RWPE1 (cell line): ENCODE measurements at regions of chr14 and their contacts with region 1.

Region 1: DNA sequence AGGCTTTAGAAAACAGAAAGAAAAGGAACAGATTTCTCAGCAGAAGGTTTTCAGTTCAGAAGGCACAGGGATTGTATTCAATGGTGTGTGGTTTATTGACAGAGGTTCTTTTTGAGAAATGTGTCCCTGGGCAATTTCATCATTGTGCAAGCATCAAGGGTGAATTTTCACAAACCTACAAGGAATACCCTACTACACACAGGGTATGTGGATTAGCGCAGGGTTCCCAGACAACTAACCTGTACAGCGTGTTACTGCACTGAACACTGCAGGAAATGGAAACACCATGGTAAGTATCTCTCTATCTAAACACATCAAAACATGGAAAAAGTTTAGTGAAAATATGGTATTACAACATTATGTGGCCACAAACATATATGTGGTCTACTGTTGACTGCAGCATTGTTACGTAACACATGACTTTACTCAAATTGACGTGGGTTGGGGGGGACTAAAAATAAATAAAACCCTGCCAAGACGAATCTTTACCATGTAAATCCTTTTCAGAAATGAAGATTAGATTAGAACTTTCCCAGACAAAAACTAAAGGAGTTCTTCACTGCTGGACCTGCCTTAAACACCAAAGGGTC is 893.1 kb downstream of the TMEM121 start:
- DNase-seq: no peak
- H3K27ac ChIP-seq: no peak overlapping the region
- CTCF ChIP-seq: no peak

Region 2: GRCh38 chr14:105647764-105648608 is 771.5 kb before region 1 on chr14:
- CTCF ChIA-PET with region 1: no interaction called
- POLR2A ChIA-PET with region 1: no interaction called
- DNase-seq: no peak
- H3K27ac ChIP-seq: no peak overlapping the region
- CTCF ChIP-seq: no peak

Region 3: DNA sequence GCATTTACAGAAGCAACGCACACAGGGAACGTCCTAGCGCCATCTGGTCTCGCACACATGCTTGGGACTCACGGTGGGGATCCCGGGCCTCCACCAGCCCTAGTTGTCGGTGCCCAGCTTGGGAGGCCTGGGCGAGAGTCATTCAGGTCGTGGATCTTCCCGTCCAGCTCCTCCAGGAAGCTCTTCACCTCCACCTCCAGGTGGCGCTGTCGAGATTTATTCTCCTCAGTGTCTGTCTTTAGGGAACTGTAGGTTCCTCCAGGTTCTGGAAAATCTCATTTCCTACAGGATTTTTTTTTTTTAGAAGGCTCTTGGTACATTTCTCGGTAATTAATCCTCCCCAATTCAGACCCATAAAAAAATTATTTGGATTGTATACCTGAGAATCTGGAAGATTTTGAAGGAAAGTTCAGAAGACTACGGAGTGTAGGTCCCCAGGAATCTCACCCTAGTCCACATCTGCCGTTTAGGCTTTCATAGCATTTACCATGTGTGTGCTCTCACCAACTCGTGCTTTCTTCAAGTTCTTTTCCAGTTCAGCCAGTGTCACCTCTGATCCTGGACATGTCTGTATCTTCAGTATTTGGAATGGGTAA is 16.9 kb after region 1 on chr14:
- CTCF ChIA-PET with region 1: interaction called, 33 read pairs
- POLR2A ChIA-PET with region 1: no interaction called
- DNase-seq: peak; percentile 23
- H3K27ac ChIP-seq: no peak overlapping the region
- CTCF ChIP-seq: peak; percentile 69